ENCODE measurements at regions of chr3 and their contacts with region 1.

Region 1: GRCh38 chr3:39378088-39378487 is 5.1 kb upstream of the SLC25A38 start:
- DNase-seq: peak; percentile 77
- ATAC-seq: peak; percentile 84
- H3K4me3 Mint-ChIP-seq: no peak overlapping the region
- H3K27ac Mint-ChIP-seq: no peak overlapping the region
- H3K4me1 Mint-ChIP-seq: peaks cover 10% of the 10 kb centered on the region
- H3K27me3 Mint-ChIP-seq: no peaks in the 10 kb centered on the region

Region 2: GRCh38 chr3:39208463-39209055 is 169.5 kb before region 1 on chr3:
- CTCF ChIA-PET with region 1: interaction called, 3 read pairs
- POLR2A ChIA-PET with region 1: no interaction called
- intact Hi-C with region 1: loop called in 1 of 2 experiments (anchors 5 kb)
- DNase-seq: peak; percentile 61
- ATAC-seq: no peak
- H3K4me3 Mint-ChIP-seq: no peak overlapping the region
- H3K27ac Mint-ChIP-seq: no peak overlapping the region
- H3K4me1 Mint-ChIP-seq: peaks cover 7% of the 10 kb centered on the region
- H3K27me3 Mint-ChIP-seq: no peaks in the 10 kb centered on the region